ENCODE measurements at regions of chr17 and their contacts with region 1.

Region 1: DNA sequence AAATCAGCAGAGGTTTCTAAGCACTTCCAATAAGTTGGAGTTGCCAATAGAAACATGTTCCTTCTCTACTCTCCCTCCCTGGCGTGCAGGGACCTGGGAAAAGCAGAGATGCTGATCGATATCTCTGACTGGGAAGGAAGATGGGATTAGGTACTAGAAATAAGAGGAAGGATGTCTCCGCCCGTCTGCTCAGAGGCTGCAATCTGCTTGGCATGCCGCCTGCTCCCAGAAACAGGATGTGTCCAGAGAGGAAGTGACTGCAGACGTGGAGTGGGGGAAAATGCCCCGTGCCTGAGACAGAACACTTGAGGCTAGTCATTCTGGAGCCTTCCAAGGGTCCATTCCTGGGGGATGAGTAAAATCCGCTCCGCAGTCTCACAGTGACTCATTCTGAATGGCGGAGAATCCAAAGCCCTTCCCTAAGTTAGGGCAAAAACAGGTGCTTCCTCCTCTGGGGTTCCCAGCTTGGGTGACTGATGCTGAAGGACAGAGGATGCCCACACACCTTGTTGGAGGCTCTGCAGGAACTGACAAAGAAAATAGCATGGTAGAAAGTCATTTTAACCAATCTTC is 45.0 kb upstream of the SMURF2 start:
- DNase-seq: peak; percentile 100
- ATAC-seq: peak; percentile 88
- H3K4me3 ChIP-seq: peak overlapping the region; percentile 50; the same call in 1 of the 2 replicates
- H3K27ac ChIP-seq: peak overlapping the region; percentile 98
- H3K4me1 ChIP-seq: peaks cover 46% of the 10 kb centered on the region
- H3K27me3 ChIP-seq: no peaks in the 10 kb centered on the region
- CTCF ChIP-seq: no peak

Region 2: DNA sequence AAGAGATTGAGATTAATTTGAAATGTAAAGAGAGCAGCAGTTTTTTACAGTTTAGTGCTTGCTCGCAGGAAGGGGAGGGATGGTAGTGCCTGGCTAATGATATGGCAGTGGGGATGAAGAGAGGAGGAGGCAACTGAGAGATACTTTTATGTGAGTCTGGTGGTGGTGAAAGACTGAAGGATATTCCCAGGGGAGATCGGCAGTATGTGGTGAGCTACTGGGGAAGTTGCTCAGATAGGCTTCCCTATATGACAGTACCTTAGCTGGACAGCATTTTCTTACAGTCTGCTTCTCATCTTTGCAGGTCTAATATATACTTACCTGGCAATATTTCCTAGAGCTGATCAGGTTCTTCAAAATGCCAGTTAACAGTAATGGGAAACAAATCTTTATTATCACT is 191.7 kb before region 1 on chr17:
- CTCF ChIA-PET with region 1: no interaction called
- POLR2A ChIA-PET with region 1: no interaction called
- intact Hi-C with region 1: no loop called
- DNase-seq: no peak
- ATAC-seq: no peak
- H3K4me3 ChIP-seq: no peak overlapping the region
- H3K27ac ChIP-seq: no peak overlapping the region
- H3K4me1 ChIP-seq: no peaks in the 10 kb centered on the region
- H3K27me3 ChIP-seq: no peaks in the 10 kb centered on the region
- CTCF ChIP-seq: no peak

Region 3: DNA sequence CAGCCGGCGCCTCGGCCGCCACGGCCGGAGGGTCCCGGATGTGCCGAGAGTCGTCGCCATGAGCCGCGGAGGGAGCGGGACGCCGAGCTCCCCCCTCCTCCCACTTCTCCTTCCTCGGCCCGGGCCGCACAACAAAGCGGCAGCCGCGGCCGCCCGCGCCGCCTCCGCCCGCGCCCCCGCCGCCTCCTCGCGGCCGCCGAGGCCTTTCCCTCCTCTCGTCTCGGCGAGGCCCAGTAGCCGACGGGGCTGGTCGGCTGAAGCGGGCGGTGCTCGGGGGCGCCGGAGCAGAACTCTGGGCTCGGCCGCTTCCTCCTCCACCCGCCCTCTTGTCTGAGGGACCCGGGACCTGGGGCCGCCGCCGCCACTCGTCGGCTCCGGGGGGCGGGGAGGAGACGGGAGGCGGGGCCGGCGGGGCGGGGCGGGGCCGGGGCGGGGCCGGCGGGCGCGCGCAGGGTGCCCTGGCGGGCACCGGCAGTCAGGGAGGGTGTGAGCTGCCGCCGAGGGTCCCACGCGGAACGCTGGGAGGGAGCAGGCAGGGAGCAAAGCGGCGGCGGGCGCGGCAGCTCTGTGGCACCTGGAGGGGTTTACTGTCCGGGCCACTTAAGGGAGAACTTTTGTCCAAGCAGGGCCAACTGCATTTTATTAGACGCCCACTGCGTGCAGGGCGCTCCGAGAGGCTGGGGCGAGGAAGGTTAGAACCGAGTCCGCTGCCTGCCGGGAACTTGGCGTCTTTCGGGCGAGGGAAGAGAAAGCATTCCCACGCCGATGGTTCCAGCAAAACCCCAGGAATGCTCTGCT is 44.9 kb before region 1 on chr17 and contains the start of gene SMURF2:
- CTCF ChIA-PET with region 1: no interaction called
- POLR2A ChIA-PET with region 1: interaction called, 10 read pairs
- intact Hi-C with region 1: loop called (anchors 1 kb)
- DNase-seq: peak; percentile 74
- ATAC-seq: peak; percentile 74
- H3K4me3 ChIP-seq: peak within 1 kb of the TSS; percentile 99
- H3K27ac ChIP-seq: peak within 1 kb of the TSS; percentile 87
- H3K4me1 ChIP-seq: peaks cover 47% of the 10 kb centered on the region
- H3K27me3 ChIP-seq: no peaks in the 10 kb centered on the region
- CTCF ChIP-seq: no peak
- total RNA-seq, gene SMURF2: 68.2 and 76.6 TPM in 2 replicates

Measured in PC-3 (cell line).